Panc1 (cell line): ENCODE measurements at regions of chr4 and their contacts with region 1.

Region 1: DNA sequence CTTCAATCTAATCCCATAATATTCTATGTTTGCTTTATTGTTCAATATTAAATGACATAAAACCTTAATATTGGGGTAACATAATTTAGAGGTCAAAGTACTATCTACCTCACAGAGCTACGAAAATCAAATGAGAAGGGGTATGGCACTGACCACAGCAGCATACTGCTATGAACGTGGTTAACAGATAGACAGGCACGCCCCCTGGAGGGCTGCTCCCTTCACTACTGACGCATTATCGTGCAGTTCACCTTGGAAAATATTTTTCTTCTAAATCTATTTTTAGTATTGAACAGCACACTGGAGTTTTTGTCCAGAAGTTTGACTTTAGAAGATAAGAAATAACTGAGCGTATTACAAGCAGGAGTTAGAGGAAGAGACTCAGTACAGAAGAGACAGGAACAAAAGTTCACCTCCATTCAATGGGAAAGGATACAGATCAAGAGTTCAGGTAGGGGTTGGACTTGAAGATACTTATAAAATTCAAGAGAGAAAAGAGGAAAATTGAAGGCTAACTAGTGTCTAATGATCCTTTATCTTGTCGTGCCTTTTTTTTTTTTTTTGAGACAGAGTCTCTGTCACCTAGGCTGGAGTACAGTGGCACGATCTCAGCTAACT is 22.7 kb downstream of the MAP9 start:
- DNase-seq: no peak
- ATAC-seq: peak; percentile 83; the same call in 1 of the 2 replicates
- H3K4me3 ChIP-seq: no peak overlapping the region
- H3K27ac ChIP-seq: no peak overlapping the region
- H3K4me1 ChIP-seq: no peaks in the 10 kb centered on the region
- H3K27me3 ChIP-seq: no peaks in the 10 kb centered on the region
- CTCF ChIP-seq: peak; percentile 78

Region 2: DNA sequence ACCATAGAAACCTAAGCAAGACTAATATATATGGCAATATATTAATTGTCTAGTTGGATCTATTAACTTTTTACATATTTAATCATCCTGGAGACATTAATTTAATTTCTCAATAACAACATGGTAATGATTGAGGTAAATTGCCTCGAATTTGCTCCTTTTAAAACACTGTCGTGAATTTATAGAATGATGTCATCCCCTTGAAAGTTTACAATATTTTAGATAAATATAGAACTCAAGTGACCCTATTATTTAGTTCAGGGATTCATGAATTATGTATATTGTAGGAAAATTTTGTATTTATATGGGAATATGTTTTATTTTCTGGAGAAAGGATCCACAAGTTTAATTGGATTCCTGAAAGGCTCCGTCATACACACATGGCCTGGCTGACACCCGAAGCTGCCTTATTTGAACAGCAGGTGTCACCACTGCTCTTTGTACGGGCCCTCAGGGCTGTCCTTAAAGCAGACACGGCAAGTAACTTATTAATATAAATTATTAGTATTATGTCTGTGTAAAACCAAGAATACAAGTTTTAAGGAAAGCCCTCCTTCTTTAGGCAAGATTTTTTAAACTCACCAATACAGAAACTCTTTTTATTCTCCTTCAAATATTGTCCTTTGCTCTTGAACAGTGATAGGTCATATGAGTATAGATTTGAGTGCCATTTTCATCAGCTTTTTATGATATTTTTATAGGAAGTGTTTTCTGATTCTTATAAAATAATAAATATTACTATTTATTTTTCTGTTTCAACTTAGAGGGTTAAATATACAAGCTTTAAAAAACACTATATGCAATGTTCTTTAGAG is 802.0 kb before region 1 on chr4:
- CTCF ChIA-PET with region 1: no interaction called
- POLR2A ChIA-PET with region 1: no interaction called
- in situ Hi-C with region 1: no loop called
- intact Hi-C with region 1: loop called (anchors 10 kb)
- DNase-seq: peak; percentile 56
- ATAC-seq: peak; percentile 77
- H3K4me3 ChIP-seq: no peak overlapping the region
- H3K27ac ChIP-seq: no peak overlapping the region
- H3K4me1 ChIP-seq: peaks cover 8% of the 10 kb centered on the region
- H3K27me3 ChIP-seq: no peaks in the 10 kb centered on the region
- CTCF ChIP-seq: peak; percentile 81

Region 3: GRCh38 chr4:154779362-154779947 is 574.6 kb before region 1 on chr4:
- CTCF ChIA-PET with region 1: no interaction called
- POLR2A ChIA-PET with region 1: no interaction called
- in situ Hi-C with region 1: no loop called
- intact Hi-C with region 1: no loop called
- DNase-seq: no peak
- ATAC-seq: no peak
- H3K4me3 ChIP-seq: no peak overlapping the region
- H3K27ac ChIP-seq: no peak overlapping the region
- H3K4me1 ChIP-seq: no peaks in the 10 kb centered on the region
- H3K27me3 ChIP-seq: no peaks in the 10 kb centered on the region
- CTCF ChIP-seq: peak; percentile 45; the same call in 1 of the 2 replicates

Region 4: DNA sequence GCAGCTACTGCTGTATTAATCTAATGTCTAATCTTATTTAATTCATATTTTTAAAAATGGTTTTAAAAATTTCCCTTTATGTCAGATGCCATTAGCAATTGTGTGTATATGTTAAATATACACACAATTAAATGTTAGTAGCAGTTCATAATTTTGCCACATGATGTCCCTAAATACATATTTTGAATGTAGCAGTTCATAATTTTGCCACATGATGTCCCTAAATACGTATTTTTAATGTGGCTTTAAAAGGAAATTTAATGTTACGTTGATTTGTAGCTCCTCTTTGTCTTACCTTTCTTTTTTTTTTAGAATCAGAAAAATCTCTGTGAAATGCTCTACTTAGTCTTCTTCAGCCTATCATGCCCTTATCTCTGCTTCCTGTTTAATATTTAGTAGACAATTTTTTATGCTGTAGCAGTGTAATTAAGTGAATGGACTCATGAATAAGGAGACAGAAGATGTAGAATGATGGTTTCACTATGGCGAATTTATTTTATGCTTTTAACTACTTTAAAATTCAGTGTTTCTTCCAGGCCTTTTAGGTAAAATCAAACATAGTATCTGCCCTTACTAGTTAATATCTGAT is 546.9 kb before region 1 on chr4:
- CTCF ChIA-PET with region 1: no interaction called
- POLR2A ChIA-PET with region 1: no interaction called
- in situ Hi-C with region 1: no loop called
- intact Hi-C with region 1: loop called (anchors 5 kb)
- DNase-seq: peak; percentile 13
- ATAC-seq: no peak
- H3K4me3 ChIP-seq: no peak overlapping the region
- H3K27ac ChIP-seq: no peak overlapping the region
- H3K4me1 ChIP-seq: no peaks in the 10 kb centered on the region
- H3K27me3 ChIP-seq: no peaks in the 10 kb centered on the region
- CTCF ChIP-seq: peak; percentile 47; the same call in 1 of the 2 replicates

Region 5: GRCh38 chr4:154854362-154854761 is 499.7 kb before region 1 on chr4:
- CTCF ChIA-PET with region 1: no interaction called
- POLR2A ChIA-PET with region 1: no interaction called
- in situ Hi-C with region 1: no loop called
- intact Hi-C with region 1: loop called (anchors 10 kb)
- DNase-seq: no peak
- ATAC-seq: peak; percentile 63; the same call in 1 of the 2 replicates
- H3K4me3 ChIP-seq: no peak overlapping the region
- H3K27ac ChIP-seq: no peak overlapping the region
- H3K4me1 ChIP-seq: no peaks in the 10 kb centered on the region
- H3K27me3 ChIP-seq: no peaks in the 10 kb centered on the region
- CTCF ChIP-seq: peak; percentile 31

Region 6: GRCh38 chr4:155207534-155208257 is 146.3 kb before region 1 on chr4:
- CTCF ChIA-PET with region 1: no interaction called
- POLR2A ChIA-PET with region 1: no interaction called
- in situ Hi-C with region 1: no loop called
- intact Hi-C with region 1: loop called (anchors 10 kb)
- DNase-seq: no peak
- ATAC-seq: peak; percentile 78
- H3K4me3 ChIP-seq: peak overlapping the region; percentile 11 to 28; a peak in 3 of 4 replicates
- H3K27ac ChIP-seq: no peak overlapping the region
- H3K4me1 ChIP-seq: no peaks in the 10 kb centered on the region
- H3K27me3 ChIP-seq: peaks cover 3% of the 10 kb centered on the region
- CTCF ChIP-seq: no peak